Gastrocnemius medialis (tissue), 4 donors: ENCODE measurements at regions of chr2 and their contacts with region 1.

Region 1: DNA sequence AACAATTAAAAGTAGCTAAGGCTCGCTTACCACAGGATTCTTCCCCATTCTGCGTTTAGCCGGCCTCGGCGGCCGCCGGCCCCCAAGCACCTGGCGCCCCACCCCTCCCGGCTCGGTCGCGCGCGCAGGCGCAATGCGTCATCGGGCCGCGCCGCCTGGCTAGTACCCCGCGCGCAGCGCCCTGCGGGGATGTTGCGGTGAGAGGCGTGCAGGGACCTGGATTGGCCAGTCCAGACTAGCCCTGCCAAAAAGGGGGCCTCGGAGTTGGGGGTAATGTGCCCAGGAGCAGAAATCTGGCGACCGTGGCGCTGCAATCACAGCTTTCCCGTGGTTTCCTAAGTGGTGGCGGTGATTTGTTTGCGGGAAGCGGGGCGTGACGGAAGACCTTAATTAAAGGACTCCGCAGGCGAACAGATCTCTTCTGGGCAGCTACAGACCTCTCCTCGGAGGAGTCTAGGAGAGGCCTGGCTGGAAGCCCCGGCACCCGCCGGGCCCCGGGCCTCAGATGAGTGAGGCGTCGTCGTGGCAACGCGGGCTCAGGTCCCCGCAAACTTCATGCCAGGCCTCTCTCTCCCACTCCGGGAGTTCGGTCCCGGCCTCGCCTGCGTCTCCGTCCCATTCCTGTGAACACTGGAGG is 606 bp downstream of the TMEM237 start:
- DNase-seq: peak; percentile 53 to 71
- ATAC-seq: peak; percentile 88 to 90
- H3K4me3 ChIP-seq: peak overlapping the region; percentile 75 to 98 (median 93)
- H3K27ac ChIP-seq: peak overlapping the region; percentile 90 to 96 (median 94)
- H3K4me1 ChIP-seq: peaks cover 15 to 16% of the 10 kb centered on the region in 2 donors
- H3K27me3 ChIP-seq: no peaks in the 10 kb centered on the region
- CTCF ChIP-seq: peak in 3 of 5 experiments; percentile 3 to 27 (median 25)
- POLR2A ChIP-seq: peak; percentile 65 to 73

Region 2: GRCh38 chr2:201406077-201406662 is 236.5 kb before region 1 on chr2:
- in situ Hi-C with region 1: no loop called
- intact Hi-C with region 1: loop called (anchors 10 kb)
- DNase-seq: peak in 1 of 2 donors; percentile 14
- ATAC-seq: peak; percentile 70 to 78
- H3K4me3 ChIP-seq: peak overlapping the region in 1 of 4 donors; percentile 21
- H3K27ac ChIP-seq: peak overlapping the region; percentile 63 to 67 (median 64)
- H3K4me1 ChIP-seq: peaks cover 64 to 66% of the 10 kb centered on the region in 2 donors
- H3K27me3 ChIP-seq: no peaks in the 10 kb centered on the region
- CTCF ChIP-seq: no peak
- POLR2A ChIP-seq: no peak

Region 3: DNA sequence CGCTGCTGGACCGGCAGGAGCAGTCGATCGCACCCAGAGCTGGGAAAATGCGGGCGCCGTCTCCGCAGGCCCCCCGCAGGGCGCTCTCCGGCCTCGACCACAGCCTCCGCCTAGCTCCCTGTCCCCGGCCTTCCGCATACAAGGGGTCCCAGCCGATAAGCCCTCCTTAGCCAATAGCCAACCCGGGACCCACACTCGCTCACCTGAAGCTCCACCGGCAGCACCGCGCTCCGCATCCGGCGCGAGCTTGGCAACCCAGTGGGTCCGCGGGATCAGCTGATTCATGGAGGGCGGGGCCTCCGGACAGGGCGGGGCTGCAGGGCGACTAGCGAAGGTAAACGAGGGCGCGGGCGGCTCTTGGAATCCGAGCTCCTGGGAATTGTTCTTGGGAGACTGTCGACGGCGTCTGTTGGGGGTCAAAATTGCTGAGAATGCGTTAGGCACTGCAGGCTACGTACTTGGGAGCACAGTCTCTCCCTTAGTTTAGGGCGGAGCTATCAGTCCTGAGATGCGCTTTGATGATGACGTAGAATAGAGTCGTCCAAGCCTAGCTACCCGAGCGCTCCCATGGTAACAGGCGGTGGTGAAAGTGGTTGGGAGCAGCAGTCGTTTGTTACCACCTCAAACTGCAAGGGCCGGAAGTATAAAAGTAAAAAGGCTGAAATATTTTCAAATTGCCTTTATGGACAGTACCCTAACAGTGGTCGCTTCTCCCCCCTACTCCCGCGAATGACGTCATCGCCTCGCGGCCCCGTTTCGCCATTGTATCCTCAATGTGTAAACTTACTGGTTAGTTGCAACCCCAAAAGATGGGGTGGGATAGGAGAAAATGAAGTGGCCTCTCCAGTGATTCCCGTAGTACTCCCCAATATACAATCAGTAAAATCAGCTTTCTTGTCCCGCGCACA is 138.2 kb after region 1 on chr2 and contains the start of gene ALS2:
- in situ Hi-C with region 1: no loop called
- intact Hi-C with region 1: loop called (anchors 5 kb)
- DNase-seq: peak; percentile 95 to 98
- ATAC-seq: peak; percentile 99 to 100
- H3K4me3 ChIP-seq: peak within 1 kb of the TSS; percentile 69 to 97 (median 88)
- H3K27ac ChIP-seq: peak within 1 kb of the TSS; percentile 88 to 92 (median 90)
- H3K4me1 ChIP-seq: peaks cover 29 to 31% of the 10 kb centered on the region in 2 donors
- H3K27me3 ChIP-seq: no peaks in the 10 kb centered on the region
- CTCF ChIP-seq: no peak
- POLR2A ChIP-seq: peak; percentile 62 to 67
- total RNA-seq, gene ALS2: 17.1 to 40.6 (median 19.5) TPM